Activated T-helper 1 cell treated with anti-CD3 and anti-CD28 coated beads, Interleukin-12 subunit alpha, Interleukin-12 subunit beta, Interleukin-2, Interleukin-4 antibody, amounts not matched to agents 30 ng/mL and 10 ng/mL and 1 ng/mL, durations not matched to agents 14 hours and 24 hours and 36 hours (primary cell): ENCODE measurements at regions of chr6 and their contacts with region 1.

Region 1: DNA sequence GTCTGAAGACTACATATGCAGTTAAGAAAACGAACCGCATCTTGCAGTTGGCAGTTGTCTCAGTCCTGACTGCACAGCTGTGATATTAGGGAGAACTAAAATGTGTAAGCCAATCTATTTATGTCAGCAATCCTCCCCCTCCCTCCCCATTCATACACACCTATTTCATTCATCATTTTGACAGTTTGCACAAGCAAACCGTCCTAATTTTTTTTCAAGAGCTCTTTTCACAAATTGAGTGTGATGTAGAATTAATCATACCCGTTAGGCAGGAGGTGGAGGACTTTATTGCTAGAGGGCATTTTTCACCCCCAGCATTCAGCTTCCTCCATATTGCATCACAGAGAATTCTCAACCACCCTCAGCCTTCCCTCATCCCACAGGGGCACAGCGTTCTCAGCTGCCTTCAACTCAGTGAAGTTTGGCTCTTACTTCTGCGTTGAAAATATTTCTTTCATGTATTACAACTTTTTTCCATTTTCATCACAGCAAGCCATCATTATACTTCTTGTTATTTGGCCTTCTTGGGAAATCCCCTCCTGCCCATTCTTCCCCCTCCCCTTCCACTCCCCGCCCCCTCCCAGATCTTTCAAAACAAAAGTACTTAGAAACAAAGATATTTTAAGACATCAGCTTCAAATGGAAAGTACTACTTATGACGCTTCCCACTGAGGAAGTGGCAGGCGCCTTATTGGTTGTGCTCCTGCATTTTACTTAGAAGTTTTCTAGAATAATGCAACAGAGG is 37.5 kb downstream of the NOX3 start:
- DNase-seq: peak; percentile 49
- H3K4me3 Mint-ChIP-seq: peak overlapping the region; percentile 73
- H3K27ac Mint-ChIP-seq: peak overlapping the region; percentile 100
- H3K4me1 Mint-ChIP-seq: peaks cover 44% of the 10 kb centered on the region
- H3K27me3 Mint-ChIP-seq: no peaks in the 10 kb centered on the region

Region 2: GRCh38 chr6:154606457-154606856 is 811.7 kb before region 1 on chr6:
- intact Hi-C with region 1: loop called (anchors 1 kb)
- DNase-seq: peak; percentile 66
- H3K4me3 Mint-ChIP-seq: peak overlapping the region; percentile 65
- H3K27ac Mint-ChIP-seq: peak overlapping the region; percentile 86
- H3K4me1 Mint-ChIP-seq: peaks cover 24% of the 10 kb centered on the region
- H3K27me3 Mint-ChIP-seq: peaks cover 3% of the 10 kb centered on the region

Region 3: DNA sequence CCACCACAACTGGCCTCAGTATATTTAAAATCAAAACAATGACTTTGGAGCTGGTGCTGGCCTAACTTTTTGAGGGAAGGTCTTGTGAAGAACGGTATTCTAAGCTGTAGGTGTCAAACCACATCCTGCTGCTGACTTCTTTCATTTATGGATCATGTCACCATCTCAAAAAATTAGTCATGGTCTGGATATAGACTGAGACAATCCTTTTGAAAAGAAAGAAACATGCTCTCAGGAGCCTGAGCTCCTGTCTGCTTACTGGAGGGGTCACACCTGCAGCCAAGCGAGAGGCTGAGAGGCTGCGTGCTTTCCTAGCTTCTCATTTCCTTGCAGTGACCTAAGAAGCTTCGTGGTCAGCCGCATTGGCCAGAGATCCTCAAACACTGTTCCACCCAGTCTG is 367.9 kb before region 1 on chr6:
- intact Hi-C with region 1: loop called (anchors 1 kb)
- DNase-seq: peak; percentile 44
- H3K4me3 Mint-ChIP-seq: peak overlapping the region; percentile 76
- H3K27ac Mint-ChIP-seq: peak overlapping the region; percentile 95
- H3K4me1 Mint-ChIP-seq: peaks cover 43% of the 10 kb centered on the region
- H3K27me3 Mint-ChIP-seq: no peaks in the 10 kb centered on the region

Region 4: DNA sequence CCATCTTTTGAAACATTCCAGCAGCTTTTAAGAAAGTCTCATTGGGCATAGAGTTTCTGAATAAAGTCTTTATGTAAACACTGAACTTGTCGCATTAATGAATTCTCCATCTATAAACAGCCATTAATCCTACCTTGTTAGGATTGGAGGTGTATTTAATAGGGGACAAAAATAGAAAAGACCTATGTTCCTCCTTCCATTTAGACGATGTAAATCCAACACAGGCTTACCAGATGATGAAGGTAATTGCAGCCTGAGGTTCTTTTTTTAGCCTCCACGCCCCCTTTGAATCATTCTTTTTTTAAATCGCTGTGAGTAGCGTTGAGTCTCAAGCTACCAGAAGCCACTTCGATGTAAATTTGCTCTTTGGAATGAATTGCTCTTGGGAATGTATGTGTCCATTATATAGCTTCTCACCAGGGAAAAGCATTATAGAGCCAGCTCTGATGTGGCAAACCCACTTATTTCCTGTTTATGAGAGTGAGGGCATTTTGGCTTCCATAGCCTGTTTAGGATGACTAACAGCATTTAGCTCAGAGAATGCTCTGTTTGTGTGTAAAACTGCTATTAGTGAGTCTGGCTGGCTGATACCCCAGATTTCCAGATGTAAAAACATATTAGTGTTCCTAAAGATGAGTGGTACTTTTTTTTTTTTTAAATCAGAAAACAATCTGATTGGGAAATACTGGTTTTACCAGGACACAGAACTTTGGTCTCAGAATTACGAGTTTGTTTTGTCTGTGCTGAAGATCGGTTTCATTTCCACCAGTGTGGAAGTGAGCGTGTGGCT is 229.3 kb before region 1 on chr6:
- intact Hi-C with region 1: loop called (anchors 1 kb)
- DNase-seq: no peak
- H3K4me3 Mint-ChIP-seq: peak overlapping the region; percentile 52
- H3K27ac Mint-ChIP-seq: peak overlapping the region; percentile 86
- H3K4me1 Mint-ChIP-seq: peaks cover 51% of the 10 kb centered on the region
- H3K27me3 Mint-ChIP-seq: no peaks in the 10 kb centered on the region

Region 5: DNA sequence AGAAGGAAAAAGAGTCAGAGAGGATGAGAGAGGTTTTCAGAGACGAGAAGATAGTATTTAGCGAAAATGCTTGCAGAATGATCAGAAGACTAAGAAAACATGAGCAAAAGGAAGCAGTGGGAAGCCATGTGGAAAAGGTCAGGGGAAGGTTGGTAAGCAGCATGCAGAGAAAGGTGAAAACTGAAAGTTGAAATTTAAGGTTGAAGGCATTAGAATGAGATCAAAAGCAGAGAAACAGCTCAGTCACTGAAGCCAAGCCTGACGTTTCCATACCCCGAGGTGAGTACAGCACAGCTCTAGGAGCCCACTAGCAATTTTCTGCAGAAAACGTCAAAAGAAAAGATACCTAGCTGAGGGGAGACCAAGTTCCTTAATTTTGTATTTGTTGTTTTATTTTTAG is 84.8 kb before region 1 on chr6:
- intact Hi-C with region 1: loop called (anchors 2 kb)
- DNase-seq: no peak
- H3K4me3 Mint-ChIP-seq: peak overlapping the region; percentile 28
- H3K27ac Mint-ChIP-seq: peak overlapping the region; percentile 76
- H3K4me1 Mint-ChIP-seq: peaks cover 50% of the 10 kb centered on the region
- H3K27me3 Mint-ChIP-seq: no peaks in the 10 kb centered on the region

Region 6: GRCh38 chr6:155400654-155400965 is 17.6 kb before region 1 on chr6:
- intact Hi-C with region 1: no loop called
- DNase-seq: no peak
- H3K4me3 Mint-ChIP-seq: no peak overlapping the region
- H3K27ac Mint-ChIP-seq: no peak overlapping the region
- H3K4me1 Mint-ChIP-seq: no peaks in the 10 kb centered on the region
- H3K27me3 Mint-ChIP-seq: peaks cover 3% of the 10 kb centered on the region

Region 7: GRCh38 chr6:155483858-155484257 is 65.7 kb after region 1 on chr6:
- intact Hi-C with region 1: no loop called
- DNase-seq: no peak
- H3K4me3 Mint-ChIP-seq: no peak overlapping the region
- H3K27ac Mint-ChIP-seq: no peak overlapping the region
- H3K4me1 Mint-ChIP-seq: no peaks in the 10 kb centered on the region
- H3K27me3 Mint-ChIP-seq: peaks cover 2% of the 10 kb centered on the region

Region 8: DNA sequence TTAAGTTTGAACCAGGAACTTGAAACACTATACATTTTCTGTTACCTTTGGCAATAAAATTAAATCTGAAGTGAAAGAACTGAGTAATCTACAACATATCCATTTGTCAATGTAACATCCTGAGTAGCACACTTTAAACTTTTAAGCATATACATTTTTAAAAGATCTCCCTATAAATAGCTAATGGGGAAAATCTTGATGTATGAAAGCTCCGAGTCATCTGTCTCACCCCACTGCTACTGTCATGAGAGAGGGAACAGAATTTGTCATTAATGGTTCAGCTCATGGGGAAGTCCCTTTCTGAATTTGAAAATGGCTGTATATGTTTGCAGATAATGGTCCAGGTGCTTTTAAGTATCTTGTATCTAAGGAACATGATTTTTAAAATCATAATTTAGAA is 92.7 kb after region 1 on chr6:
- intact Hi-C with region 1: loop called (anchors 5 kb)
- DNase-seq: no peak
- H3K4me3 Mint-ChIP-seq: no peak overlapping the region
- H3K27ac Mint-ChIP-seq: no peak overlapping the region
- H3K4me1 Mint-ChIP-seq: no peaks in the 10 kb centered on the region
- H3K27me3 Mint-ChIP-seq: peaks cover 3% of the 10 kb centered on the region

Region 9: GRCh38 chr6:156776840-156777576 is 1358.8 kb after region 1 on chr6 and contains the start of gene ARID1B:
- intact Hi-C with region 1: loop called (anchors 2 kb)
- DNase-seq: peak; percentile 75
- H3K4me3 Mint-ChIP-seq: peak within 1 kb of the TSS; percentile 97
- H3K27ac Mint-ChIP-seq: peak within 1 kb of the TSS; percentile 98
- H3K4me1 Mint-ChIP-seq: peaks cover 52% of the 10 kb centered on the region
- H3K27me3 Mint-ChIP-seq: peaks cover 3% of the 10 kb centered on the region
- total RNA-seq, gene ARID1B: 73.6 and 79.1 TPM in 2 replicates